Mammary epithelial cell (primary cell): ENCODE measurements at regions of chr9 and their contacts with region 1.

Region 1: GRCh38 chr9:109574068-109574882 is 76.2 kb upstream of the PTPN3 start:
- DNase-seq: peak; percentile 43
- H3K4me3 ChIP-seq: no peak overlapping the region
- H3K27ac ChIP-seq: no peak overlapping the region
- H3K4me1 ChIP-seq: peaks cover 5% of the 10 kb centered on the region
- H3K27me3 ChIP-seq: no peaks in the 10 kb centered on the region
- CTCF ChIP-seq: peak; percentile 67 to 74

Region 2: DNA sequence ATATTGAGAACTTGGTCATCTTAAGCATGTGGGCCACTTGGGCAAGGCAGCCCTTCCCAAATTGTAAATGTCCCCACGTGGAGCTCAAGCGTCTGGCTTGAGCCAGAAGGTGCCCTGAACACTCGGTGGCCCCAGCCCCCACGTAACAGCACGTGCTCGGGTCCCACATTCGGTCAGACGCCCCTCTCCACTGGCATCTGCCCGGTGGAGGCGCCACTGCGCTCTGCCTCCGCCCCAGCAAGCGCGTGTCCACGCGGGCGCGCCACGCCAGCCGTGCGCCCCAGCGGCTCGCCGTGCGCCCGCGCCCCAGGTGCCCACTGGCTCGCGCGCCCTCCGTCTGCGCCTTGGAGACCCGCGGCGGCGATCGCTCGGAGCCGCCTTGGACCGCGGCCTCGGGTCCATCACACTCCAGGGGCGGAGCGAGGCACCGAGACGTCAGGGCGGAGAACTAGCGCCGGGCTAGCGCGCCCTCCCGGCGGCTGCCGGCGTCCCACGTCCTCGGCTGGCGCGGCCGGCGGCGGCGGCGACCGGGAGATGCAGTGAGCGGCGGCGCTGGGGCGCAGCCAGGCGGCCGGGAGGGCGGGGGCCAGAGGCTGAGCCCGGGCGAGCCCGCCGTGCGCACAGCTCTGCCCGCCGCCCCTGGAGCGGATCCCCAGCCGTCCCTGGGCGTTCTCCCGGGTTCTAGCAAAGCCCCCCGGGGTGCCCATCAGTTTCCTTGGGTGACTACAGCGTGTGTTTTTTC is 205.6 kb after region 1 on chr9 and contains the start of gene PALM2AKAP2:
- CTCF ChIA-PET with region 1: no interaction called
- dilution Hi-C with region 1: no loop called
- in situ Hi-C with region 1: no loop called
- intact Hi-C with region 1: loop called (anchors 1 kb)
- DNase-seq: peak; percentile 73
- H3K4me3 ChIP-seq: peak within 1 kb of the TSS; percentile 71 to 77 (median 72)
- H3K27ac ChIP-seq: peak within 1 kb of the TSS; percentile 52
- H3K4me1 ChIP-seq: peaks cover 29% of the 10 kb centered on the region
- H3K27me3 ChIP-seq: no peaks in the 10 kb centered on the region
- CTCF ChIP-seq: no peak
- total RNA-seq, gene PALM2AKAP2: 22.3 to 49.0 TPM

Region 3: DNA sequence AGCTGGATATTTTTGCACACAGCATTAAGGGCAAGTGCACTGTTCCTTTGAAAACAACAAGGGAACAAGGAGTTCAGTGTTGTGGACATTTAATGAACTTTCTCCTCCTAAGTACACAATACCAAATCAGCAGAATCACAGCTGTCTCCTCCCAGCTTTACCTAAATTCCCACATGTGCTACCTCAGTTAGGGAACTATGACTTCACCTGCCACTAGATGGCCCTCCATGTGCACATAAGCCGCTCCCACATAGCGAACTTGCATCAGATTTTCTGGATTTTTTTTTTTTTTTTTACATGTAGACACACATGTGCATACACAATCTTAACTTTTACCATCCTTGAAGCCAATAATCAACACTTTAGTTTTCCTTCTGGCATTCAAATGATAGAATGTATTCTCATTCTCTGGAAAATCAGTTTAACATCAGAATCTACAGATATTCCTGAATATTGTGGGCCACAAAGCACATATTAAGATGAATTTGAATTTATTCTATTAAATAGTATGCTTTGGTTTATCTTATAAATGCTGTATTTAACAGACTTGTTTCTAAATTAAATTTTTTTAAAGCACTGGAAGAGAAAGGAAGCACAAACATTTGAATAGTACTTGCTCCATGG is 329.4 kb after region 1 on chr9:
- CTCF ChIA-PET with region 1: interaction called, 4 read pairs
- dilution Hi-C with region 1: no loop called
- in situ Hi-C with region 1: no loop called
- intact Hi-C with region 1: loop called (anchors 5 kb)
- DNase-seq: peak; percentile 53
- H3K4me3 ChIP-seq: no peak overlapping the region
- H3K27ac ChIP-seq: no peak overlapping the region
- H3K4me1 ChIP-seq: no peaks in the 10 kb centered on the region
- H3K27me3 ChIP-seq: no peaks in the 10 kb centered on the region
- CTCF ChIP-seq: peak; percentile 88 to 93

Region 4: DNA sequence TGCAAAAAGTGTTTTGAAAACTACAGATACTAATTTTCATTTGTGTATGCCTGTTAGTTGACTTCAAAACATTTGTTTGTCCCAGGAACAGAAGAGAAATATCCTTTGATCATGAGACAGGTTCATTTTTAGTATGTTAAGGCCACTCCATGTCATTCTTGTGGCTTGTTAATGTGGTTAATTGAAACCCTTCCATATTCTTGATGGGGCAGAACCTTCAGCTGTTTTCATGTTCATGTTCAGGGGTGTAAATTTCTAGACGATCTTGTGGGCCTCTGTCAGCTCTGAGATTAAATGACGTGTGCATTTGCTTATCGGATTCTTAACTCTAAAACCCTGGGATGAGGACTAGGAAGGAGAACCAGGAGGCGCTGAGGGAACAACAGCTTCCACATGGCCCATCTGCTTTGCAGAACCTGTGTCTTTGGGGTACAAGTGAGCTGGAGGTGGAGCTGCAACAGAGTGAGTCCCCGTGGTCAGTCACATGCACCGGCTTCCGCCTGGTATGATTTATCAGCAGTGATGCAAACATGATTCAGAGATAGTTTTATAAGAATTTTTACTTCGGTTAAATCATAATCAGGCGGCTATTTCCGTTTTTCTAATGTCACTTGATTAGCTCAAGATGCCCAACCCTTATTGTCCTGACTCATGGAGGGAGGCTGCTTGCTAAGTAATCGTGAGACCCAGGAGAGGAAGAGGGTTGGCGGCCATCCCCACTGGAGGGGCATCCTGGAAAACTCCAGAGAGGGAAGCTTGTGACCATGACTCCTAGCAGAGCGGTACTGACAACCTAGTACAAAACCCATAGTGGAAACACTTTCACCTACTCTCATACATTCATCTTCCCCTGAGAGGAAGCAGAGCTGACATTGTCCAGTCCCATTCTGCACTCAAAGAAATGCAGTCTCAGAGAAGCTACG is 495.3 kb after region 1 on chr9:
- CTCF ChIA-PET with region 1: no interaction called
- dilution Hi-C with region 1: no loop called
- in situ Hi-C with region 1: loop called (anchors 10 to 25 kb)
- intact Hi-C with region 1: no loop called
- DNase-seq: peak; percentile 17
- H3K4me3 ChIP-seq: no peak overlapping the region
- H3K27ac ChIP-seq: no peak overlapping the region
- H3K4me1 ChIP-seq: peaks cover 3% of the 10 kb centered on the region
- H3K27me3 ChIP-seq: no peaks in the 10 kb centered on the region
- CTCF ChIP-seq: no peak

Region 5: GRCh38 chr9:110217656-110218099 is 643.4 kb after region 1 on chr9:
- CTCF ChIA-PET with region 1: no interaction called
- dilution Hi-C with region 1: no loop called
- in situ Hi-C with region 1: no loop called
- intact Hi-C with region 1: loop called (anchors 5 kb)
- DNase-seq: peak; percentile 22
- H3K4me3 ChIP-seq: no peak overlapping the region
- H3K27ac ChIP-seq: no peak overlapping the region
- H3K4me1 ChIP-seq: no peaks in the 10 kb centered on the region
- H3K27me3 ChIP-seq: no peaks in the 10 kb centered on the region
- CTCF ChIP-seq: peak; percentile 73